AG04449 (cell line): ENCODE measurements at regions of chr14 and their contacts with region 1.

Region 1: GRCh38 chr14:64823305-64823861 is 56.3 kb downstream of the SPTB start:
- DNase-seq: no peak
- H3K4me3 ChIP-seq: no peak overlapping the region
- CTCF ChIP-seq: peak; percentile 96

Region 2: DNA sequence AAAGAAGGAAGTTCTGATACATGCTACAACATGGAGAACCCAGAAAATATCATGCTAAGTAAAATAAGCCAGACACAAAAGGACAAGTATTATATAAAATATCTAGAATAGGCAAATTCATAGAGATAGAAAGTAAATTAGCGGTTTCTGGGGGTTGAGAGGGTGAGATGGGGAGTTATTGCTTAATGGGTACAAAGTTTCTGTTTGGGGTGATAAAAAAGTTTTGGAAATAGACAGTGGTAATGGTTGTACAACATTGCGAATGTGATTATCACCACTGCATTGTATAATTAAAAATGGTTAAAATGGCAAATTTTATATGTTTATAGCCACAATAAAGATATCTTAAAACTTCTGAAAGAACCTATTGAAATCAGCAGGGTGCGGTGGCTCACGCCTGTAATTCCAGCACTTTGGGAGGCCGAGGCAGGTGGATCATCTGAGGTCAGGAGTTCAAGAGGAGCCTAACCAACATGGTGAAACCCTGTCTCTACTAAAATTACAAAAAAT is 334.7 kb before region 1 on chr14:
- CTCF ChIA-PET with region 1: no interaction called
- POLR2A ChIA-PET with region 1: no interaction called
- DNase-seq: no peak
- H3K4me3 ChIP-seq: no peak overlapping the region
- CTCF ChIP-seq: no peak

Region 3: DNA sequence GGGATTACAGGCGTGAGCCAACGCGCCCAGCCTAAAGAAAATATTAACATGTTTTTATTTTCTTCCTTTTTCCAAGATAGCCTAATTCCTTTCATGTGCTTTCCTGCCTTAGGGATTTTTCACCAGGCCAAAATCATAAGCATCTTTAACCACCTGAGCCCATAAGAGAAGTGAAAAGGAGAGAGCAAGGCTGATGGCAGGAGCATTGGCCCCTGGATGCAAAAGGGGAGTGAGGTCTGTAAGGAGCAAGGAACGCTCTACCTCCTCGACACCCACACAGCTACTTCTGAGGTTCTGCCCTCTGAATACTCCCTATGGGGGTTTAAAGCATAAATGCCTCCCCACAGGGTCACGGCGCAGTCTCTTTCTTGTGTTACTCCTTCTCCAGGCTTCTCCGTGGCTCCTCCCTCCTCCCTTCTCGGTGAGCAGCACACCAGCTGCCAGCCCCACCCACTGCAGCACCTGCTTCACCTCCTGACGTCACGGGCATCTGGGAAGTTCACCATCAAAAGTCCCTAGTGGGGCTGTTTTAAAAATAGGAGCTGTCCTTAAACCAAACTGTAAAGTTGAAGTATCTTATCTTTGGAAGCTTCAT is 11.1 kb before region 1 on chr14:
- CTCF ChIA-PET with region 1: interaction called, 148 read pairs
- POLR2A ChIA-PET with region 1: no interaction called
- DNase-seq: no peak
- H3K4me3 ChIP-seq: no peak overlapping the region
- CTCF ChIP-seq: no peak

Region 4: GRCh38 chr14:64841121-64841651 is 17.8 kb after region 1 on chr14:
- CTCF ChIA-PET with region 1: interaction called, 219 read pairs
- POLR2A ChIA-PET with region 1: no interaction called
- DNase-seq: peak; percentile 34
- H3K4me3 ChIP-seq: no peak overlapping the region
- CTCF ChIP-seq: peak; percentile 51

Region 5: DNA sequence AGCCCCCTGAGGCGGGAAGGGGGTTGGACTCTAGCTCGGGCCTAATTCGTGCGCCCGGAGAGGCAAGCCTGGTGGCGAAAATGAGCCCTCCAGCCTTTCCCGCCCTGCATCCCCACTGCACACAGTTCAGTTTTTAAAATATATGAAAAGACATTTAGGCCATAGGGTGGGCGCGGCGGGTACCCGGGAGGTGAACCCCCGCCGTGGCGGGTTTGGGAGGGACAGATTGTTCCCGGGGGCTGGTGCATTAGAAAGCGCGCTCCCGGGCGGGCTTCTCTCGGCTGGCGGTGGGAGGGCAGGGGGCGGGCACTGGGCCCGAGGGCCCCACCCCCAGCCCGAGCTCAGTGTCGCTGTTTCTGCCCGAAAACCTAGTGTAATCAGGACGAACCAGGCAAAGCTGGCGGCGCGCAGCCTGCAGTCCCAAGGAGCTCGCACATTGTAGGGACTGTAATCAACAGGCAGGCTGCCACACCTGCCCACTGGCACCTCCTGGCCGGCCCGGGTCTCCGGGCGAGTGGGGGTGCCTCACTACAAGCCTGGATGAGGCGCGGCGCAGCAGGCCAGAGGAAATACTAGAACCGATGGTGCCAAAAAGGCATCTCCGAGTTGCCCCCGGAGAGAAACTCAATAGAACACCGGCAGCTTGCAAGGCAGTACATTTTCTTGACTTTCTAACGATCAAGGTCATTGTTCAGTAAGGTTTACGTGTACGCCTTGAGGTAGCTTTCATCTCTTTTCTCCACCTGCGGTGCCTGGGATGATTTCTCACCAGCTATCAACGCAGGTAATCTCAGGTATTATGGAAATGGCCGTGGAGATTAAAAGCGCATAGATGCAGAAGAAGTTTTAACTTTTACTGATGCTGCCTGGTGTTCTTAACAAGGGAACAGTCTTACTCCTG is 57.1 kb after region 1 on chr14:
- CTCF ChIA-PET with region 1: interaction called, 419 read pairs
- POLR2A ChIA-PET with region 1: no interaction called
- DNase-seq: no peak
- H3K4me3 ChIP-seq: peak overlapping the region; percentile 42
- CTCF ChIP-seq: no peak

Region 6: GRCh38 chr14:64914237-64914971 is 91.0 kb after region 1 on chr14 and contains the start of gene CHURC1:
- CTCF ChIA-PET with region 1: interaction called, 27 read pairs
- POLR2A ChIA-PET with region 1: no interaction called
- DNase-seq: peak; percentile 84
- H3K4me3 ChIP-seq: peak within 1 kb of the TSS; percentile 98
- CTCF ChIP-seq: no peak

Region 7: GRCh38 chr14:64937171-64937820 is 113.9 kb after region 1 on chr14:
- CTCF ChIA-PET with region 1: interaction called, 16 read pairs
- POLR2A ChIA-PET with region 1: no interaction called
- DNase-seq: no peak
- H3K4me3 ChIP-seq: no peak overlapping the region
- CTCF ChIP-seq: no peak